Panc1 (cell line): ENCODE measurements at regions of chr1 and their contacts with region 1.

Region 1: GRCh38 chr1:234918181-234918841 is 210.3 kb downstream of the TOMM20 start:
- DNase-seq: no peak
- ATAC-seq: no peak
- H3K4me3 ChIP-seq: no peak overlapping the region
- H3K27ac ChIP-seq: peak overlapping the region; percentile 81
- H3K4me1 ChIP-seq: peaks cover 30% of the 10 kb centered on the region
- H3K27me3 ChIP-seq: no peaks in the 10 kb centered on the region
- CTCF ChIP-seq: no peak

Region 2: DNA sequence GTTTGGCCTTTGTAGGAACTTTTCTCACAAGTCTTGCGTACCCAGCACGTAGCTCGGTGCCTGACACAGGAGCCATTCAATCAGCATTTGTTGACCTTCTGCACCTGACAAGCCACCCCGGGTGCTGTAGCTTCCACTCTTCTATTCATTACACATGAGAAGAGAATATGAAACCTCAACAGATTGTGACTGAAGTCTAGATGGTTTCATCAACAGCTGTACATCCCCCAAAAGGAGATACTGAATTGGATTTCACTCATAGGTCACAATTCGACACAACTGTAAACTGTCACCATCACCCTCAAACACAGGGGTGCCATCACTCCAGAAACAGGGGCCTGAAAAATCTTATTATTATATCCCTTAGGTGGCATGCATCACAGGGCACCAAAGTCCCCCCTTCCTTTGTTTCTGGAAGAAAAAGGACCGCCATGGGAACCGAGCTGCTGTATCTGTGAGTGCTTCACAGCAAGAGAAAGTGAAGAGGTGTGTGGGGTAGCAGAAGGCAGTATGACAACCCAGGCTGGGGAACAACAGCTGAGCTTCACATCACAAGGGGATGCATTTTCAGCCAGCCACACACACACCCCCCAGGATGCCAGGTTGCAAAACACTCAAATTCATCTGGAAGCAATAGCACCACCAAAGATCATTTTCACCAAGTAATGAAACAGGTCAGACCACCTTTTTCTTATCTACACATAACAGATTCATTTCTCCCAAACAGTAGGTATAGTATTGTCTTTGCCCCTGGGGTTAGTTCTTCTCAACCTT is 15.3 kb before region 1 on chr1:
- CTCF ChIA-PET with region 1: no interaction called
- POLR2A ChIA-PET with region 1: interaction called, 12 read pairs
- in situ Hi-C with region 1: no loop called
- intact Hi-C with region 1: no loop called
- DNase-seq: no peak
- ATAC-seq: no peak
- H3K4me3 ChIP-seq: no peak overlapping the region
- H3K27ac ChIP-seq: peak overlapping the region; percentile 70; the same call in 1 of the 2 replicates
- H3K4me1 ChIP-seq: peaks cover 19% of the 10 kb centered on the region
- H3K27me3 ChIP-seq: no peaks in the 10 kb centered on the region
- CTCF ChIP-seq: no peak